CD14-positive monocyte (primary cell): ENCODE measurements at regions of chr11 and their contacts with region 1.

Region 1: GRCh38 chr11:105071089-105071732 is 26.1 kb upstream of the CARD16 start:
- DNase-seq: peak in 1 of 3 donors; percentile 33
- H3K4me3 ChIP-seq: peak overlapping the region in 1 of 3 experiments; percentile 23
- H3K4me3 Mint-ChIP-seq: peak overlapping the region; percentile 18 to 70
- H3K27ac ChIP-seq: peak overlapping the region; percentile 20 to 66
- H3K27ac Mint-ChIP-seq: peak overlapping the region; percentile 74 to 96 (median 88)
- H3K4me1 ChIP-seq: peaks cover 26 to 28% of the 10 kb centered on the region in 2 donors
- H3K4me1 Mint-ChIP-seq: peaks cover 24% of the 10 kb centered on the region
- H3K27me3 ChIP-seq: no peaks in the 10 kb centered on the region
- H3K27me3 Mint-ChIP-seq: no peaks in the 10 kb centered on the region
- CTCF ChIP-seq: no peak

Region 2: GRCh38 chr11:105081412-105082087 is 10.3 kb after region 1 on chr11:
- intact Hi-C with region 1: loop called in 1 of 2 experiments (anchors 1 kb)
- DNase-seq: no peak
- H3K4me3 ChIP-seq: no peak overlapping the region
- H3K4me3 Mint-ChIP-seq: no peak overlapping the region
- H3K27ac ChIP-seq: peak overlapping the region in 1 of 2 donors; percentile 74
- H3K27ac Mint-ChIP-seq: peak overlapping the region in 1 of 7 donors; percentile 8
- H3K4me1 ChIP-seq: peaks cover 18 to 21% of the 10 kb centered on the region in 2 donors
- H3K4me1 Mint-ChIP-seq: peaks cover 35% of the 10 kb centered on the region
- H3K27me3 ChIP-seq: no peaks in the 10 kb centered on the region
- H3K27me3 Mint-ChIP-seq: peaks cover 0 to 2% (median 1%) of the 10 kb centered on the region in 3 donors
- CTCF ChIP-seq: no peak

Region 3: GRCh38 chr11:105109855-105110687 is 38.9 kb after region 1 on chr11:
- intact Hi-C with region 1: loop called in 1 of 2 experiments (anchors 2 kb)
- DNase-seq: peak in 2 of 3 donors; percentile 19 to 41
- H3K4me3 ChIP-seq: peak overlapping the region; percentile 15 to 62 (median 16)
- H3K4me3 Mint-ChIP-seq: peak overlapping the region; percentile 4 to 77
- H3K27ac ChIP-seq: peak overlapping the region in 1 of 2 donors; percentile 67
- H3K27ac Mint-ChIP-seq: peak overlapping the region; percentile 46 to 88 (median 70)
- H3K4me1 ChIP-seq: peaks cover 18 to 20% of the 10 kb centered on the region in 2 donors
- H3K4me1 Mint-ChIP-seq: peaks cover 29% of the 10 kb centered on the region
- H3K27me3 ChIP-seq: no peaks in the 10 kb centered on the region
- H3K27me3 Mint-ChIP-seq: peaks cover 0 to 4% (median 3%) of the 10 kb centered on the region in 3 donors
- CTCF ChIP-seq: no peak